Breast epithelium (tissue), 4 donors: ENCODE measurements at regions of chrX and their contacts with region 1.

Region 1: DNA sequence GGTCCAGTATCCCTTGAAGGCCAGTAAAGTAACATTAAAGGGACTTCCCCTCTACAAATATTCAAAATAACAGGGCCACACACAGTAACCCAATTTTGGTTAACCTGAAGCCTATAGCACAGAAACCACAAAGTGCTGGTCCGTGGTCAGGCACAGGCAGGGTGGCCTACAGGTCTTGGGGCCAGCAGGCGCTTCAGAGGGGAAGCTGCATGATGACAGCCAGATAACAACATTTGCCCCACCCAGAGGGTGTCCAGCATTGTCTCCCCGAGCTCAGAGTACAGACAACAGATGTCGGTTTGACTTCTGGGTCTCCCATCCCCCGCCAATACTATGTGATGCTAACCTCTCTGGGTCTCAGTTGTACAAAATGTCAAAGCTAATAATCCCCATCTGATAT is 51.1 kb downstream of the SH3KBP1 start:
- DNase-seq: no peak
- H3K4me3 ChIP-seq: no peak overlapping the region
- H3K27ac ChIP-seq: no peak overlapping the region
- H3K4me1 ChIP-seq: no peaks in the 10 kb centered on the region
- H3K27me3 ChIP-seq: peaks cover 0 to 11% of the 10 kb centered on the region in 2 donors
- CTCF ChIP-seq: no peak
- POLR2A ChIP-seq: no peak

Region 2: DNA sequence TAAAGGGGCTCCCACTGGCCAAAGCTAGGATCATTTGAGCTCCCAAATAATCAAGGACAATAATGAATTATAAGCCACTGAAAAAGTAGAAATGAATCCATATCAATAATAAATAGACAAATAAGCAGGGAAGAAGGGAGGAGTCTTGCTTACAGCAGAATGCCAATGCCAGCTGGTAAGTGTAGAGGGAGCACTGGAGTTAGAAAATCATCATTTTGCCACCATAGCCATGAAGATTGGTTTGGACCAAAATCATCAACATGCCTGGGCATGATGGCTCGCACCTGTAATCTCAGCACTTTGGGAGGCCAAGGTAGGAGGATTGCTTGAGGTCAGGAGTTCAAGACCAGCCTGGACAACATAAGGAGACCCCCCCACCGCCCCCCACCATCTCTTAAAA is 71.5 kb after region 1 on chrX:
- intact Hi-C with region 1: loop called (anchors 2 kb)
- DNase-seq: no peak
- H3K4me3 ChIP-seq: no peak overlapping the region
- H3K27ac ChIP-seq: no peak overlapping the region
- H3K4me1 ChIP-seq: no peaks in the 10 kb centered on the region
- H3K27me3 ChIP-seq: peaks cover 0 to 3% of the 10 kb centered on the region in 2 donors
- CTCF ChIP-seq: no peak
- POLR2A ChIP-seq: no peak